ENCODE measurements at regions of chr20 and their contacts with region 1.

Region 1: DNA sequence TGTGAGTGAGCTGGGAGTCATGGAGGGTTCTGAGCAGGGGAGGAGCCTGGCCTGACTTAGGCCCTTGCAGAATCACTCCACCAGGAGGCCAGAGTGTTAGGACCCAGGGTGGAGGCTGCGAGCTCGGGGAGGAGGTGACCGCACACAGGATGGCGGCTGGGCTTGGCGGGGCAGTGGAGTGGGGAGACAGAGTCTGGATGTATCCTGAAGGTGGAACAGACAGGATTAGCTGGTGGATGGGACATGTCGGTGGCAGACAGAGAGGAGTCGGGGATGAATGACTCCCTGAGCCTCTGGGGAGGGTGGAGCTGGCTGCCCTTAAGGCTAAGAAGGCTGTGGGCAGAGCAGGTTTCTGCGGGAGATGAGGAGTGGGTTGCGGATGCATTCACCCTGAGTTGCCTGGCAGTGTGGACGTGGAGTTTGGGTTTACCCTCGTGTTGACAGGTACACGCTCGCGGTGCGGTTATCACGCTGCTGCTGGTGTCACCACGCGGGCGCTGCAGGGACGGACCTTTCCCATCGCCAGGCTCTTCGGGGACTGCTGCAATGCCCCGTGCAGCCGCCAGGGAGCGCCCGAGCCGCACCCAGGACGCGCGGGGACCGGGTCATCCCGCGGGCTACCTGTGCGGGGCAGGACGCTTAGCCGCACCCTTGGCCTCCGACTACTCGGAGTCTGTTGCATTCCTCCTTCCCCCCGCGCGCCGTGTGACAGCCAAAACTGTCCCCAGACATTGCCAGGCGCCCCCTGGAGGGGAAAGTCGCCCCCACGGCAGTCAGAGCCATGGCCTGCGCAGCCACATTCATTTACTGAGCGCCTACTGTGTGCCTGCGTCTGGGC is 43.0 kb upstream of the PTGIS start:
- DNase-seq: peak; percentile 88 to 94 (median 92)
- ATAC-seq: peak; percentile 92
- H3K4me3 ChIP-seq: peak overlapping the region; percentile 43
- H3K27ac ChIP-seq: peak overlapping the region; percentile 28; the same call in 1 of the 3 replicates
- H3K4me1 ChIP-seq: peaks cover 5 to 21% of the 10 kb centered on the region in 2 experiments; a peak in 4 of 5 replicates
- H3K27me3 ChIP-seq: peaks cover under 1 to 17% of the 10 kb centered on the region in 2 experiments; a peak in 3 of 5 replicates
- CTCF ChIP-seq: peak; percentile 98 to 99 (median 99)
- EP300 ChIP-seq: no peak
- POLR2A ChIP-seq: no peak
- RAD21 ChIP-seq: peak; percentile 99 to 100

Region 2: DNA sequence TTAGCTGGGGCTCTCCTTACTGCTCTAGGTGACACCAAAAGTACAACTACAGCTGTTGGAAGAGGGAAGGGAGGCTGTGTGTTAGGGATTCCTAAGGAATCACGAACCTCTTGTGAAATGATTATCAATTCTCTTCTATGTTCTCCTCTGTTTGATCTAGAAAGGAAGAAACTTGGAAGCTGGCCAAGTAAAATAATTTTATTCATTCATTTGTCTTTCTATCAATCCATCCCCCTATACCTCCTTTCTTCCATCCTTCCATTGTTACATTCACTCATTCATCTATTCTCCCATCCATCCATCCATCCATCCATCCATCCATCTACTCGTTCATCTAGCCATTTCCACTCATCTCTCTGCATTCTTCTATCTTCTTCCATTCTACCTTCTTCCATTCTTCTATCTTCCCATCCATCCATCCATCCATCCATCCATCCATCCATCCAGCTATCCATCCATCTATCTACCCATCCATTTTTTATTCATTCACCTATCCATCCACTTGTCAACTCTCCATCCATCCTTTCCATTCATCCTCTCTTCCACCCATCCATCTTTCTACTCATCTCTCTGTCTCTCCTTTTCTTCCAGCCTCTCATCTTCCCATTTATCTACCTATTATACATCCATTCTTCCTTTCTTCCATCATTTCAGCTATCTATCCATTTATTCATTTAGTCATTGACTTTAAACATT is 280.2 kb before region 1 on chr20:
- CTCF ChIA-PET with region 1: interaction called, 47 read pairs
- POLR2A ChIA-PET with region 1: no interaction called
- in situ Hi-C with region 1: loop called (anchors 5 kb)
- intact Hi-C with region 1: loop called (anchors 5 kb)
- DNase-seq: no peak
- ATAC-seq: no peak
- H3K4me3 ChIP-seq: no peak overlapping the region
- H3K27ac ChIP-seq: no peak overlapping the region
- H3K4me1 ChIP-seq: peaks cover 0 to 4% of the 10 kb centered on the region in 2 experiments; a peak in 2 of 5 replicates
- H3K27me3 ChIP-seq: peaks cover 31 to 48% of the 10 kb centered on the region in 2 experiments
- CTCF ChIP-seq: no peak
- EP300 ChIP-seq: no peak
- POLR2A ChIP-seq: no peak
- RAD21 ChIP-seq: no peak

Region 3: GRCh38 chr20:49541733-49542513 is 69.0 kb before region 1 on chr20:
- CTCF ChIA-PET with region 1: interaction called, 50 read pairs
- POLR2A ChIA-PET with region 1: no interaction called
- in situ Hi-C with region 1: loop called (anchors 10 kb)
- intact Hi-C with region 1: loop called (anchors 1 kb)
- DNase-seq: peak; percentile 80 to 90 (median 88)
- ATAC-seq: peak; percentile 86
- H3K4me3 ChIP-seq: no peak overlapping the region
- H3K27ac ChIP-seq: no peak overlapping the region
- H3K4me1 ChIP-seq: peaks cover 0 to 4% of the 10 kb centered on the region in 2 experiments; a peak in 1 of 5 replicates
- H3K27me3 ChIP-seq: peaks cover 2 to 18% of the 10 kb centered on the region in 2 experiments; a peak in 2 of 5 replicates
- CTCF ChIP-seq: peak; percentile 94 to 99 (median 99)
- EP300 ChIP-seq: 0 out of 2 replicates have a peak, but pooled peaks have one; percentile 26
- POLR2A ChIP-seq: no peak
- RAD21 ChIP-seq: peak; percentile 74 to 94

Region 4: GRCh38 chr20:49713753-49714712 is 103.1 kb after region 1 on chr20 and contains the start of gene B4GALT5:
- CTCF ChIA-PET with region 1: no interaction called
- POLR2A ChIA-PET with region 1: no interaction called
- in situ Hi-C with region 1: no loop called
- intact Hi-C with region 1: loop called (anchors 2 kb)
- DNase-seq: peak; percentile 87 to 94 (median 90)
- ATAC-seq: peak; percentile 86
- H3K4me3 ChIP-seq: peak within 1 kb of the TSS; percentile 78
- H3K27ac ChIP-seq: peak within 1 kb of the TSS; percentile 86
- H3K4me1 ChIP-seq: peaks cover 18 to 21% of the 10 kb centered on the region in 2 experiments; a peak in 3 of 5 replicates
- H3K27me3 ChIP-seq: no peaks in the 10 kb centered on the region
- CTCF ChIP-seq: no peak
- EP300 ChIP-seq: 0 out of 2 replicates have a peak, but pooled peaks have one; percentile 6
- POLR2A ChIP-seq: 0 out of 2 replicates have a peak, but pooled peaks have one; percentile 28
- RAD21 ChIP-seq: no peak
- polyA plus RNA-seq, gene B4GALT5: 12.2 to 17.5 TPM

Region 5: GRCh38 chr20:49821870-49822331 is 211.0 kb after region 1 on chr20:
- CTCF ChIA-PET with region 1: interaction called, 24 read pairs
- POLR2A ChIA-PET with region 1: no interaction called
- in situ Hi-C with region 1: no loop called
- intact Hi-C with region 1: no loop called
- DNase-seq: no peak
- ATAC-seq: peak; percentile 48; the same call in 2 of the 3 replicates
- H3K4me3 ChIP-seq: no peak overlapping the region
- H3K27ac ChIP-seq: no peak overlapping the region
- H3K4me1 ChIP-seq: no peaks in the 10 kb centered on the region
- H3K27me3 ChIP-seq: no peaks in the 10 kb centered on the region
- CTCF ChIP-seq: peak in 2 of 3 experiments; percentile 30 to 36; a peak in 3 of 6 replicates
- EP300 ChIP-seq: no peak
- POLR2A ChIP-seq: no peak
- RAD21 ChIP-seq: peak in 1 of 2 experiments; percentile 49; a peak in 2 of 4 replicates

Region 6: DNA sequence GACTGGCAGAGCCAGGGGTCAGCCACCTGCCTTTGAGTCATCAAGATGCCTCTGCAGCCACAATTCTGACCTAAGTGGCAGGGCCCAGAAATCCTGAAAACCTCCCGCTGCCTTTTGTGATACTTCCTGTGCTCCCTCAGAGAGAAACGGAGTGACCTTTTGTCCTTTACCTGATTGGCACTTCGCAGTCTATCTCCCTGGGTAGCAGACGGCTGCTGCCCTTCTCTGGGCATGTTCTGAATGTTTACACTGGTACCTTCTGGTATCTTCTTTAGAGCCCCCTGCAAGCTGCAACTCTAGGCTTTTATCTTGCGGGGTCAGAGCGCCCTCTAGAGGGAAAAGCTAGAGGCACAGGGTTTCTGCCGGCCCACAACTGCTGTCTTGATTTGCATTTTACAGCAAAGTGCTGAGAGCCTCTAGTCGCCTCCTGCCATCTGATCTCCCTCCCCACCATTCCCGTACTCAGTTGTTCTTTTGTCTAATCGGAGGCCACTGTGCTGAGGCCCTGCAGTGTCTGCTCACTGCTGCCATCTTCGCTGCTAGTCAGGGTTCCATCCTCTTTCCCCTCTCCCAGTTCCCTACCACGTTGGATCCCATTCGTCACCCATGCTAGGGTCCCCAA is 277.5 kb after region 1 on chr20:
- CTCF ChIA-PET with region 1: interaction called, 22 read pairs
- POLR2A ChIA-PET with region 1: interaction called, 3 read pairs
- in situ Hi-C with region 1: no loop called
- intact Hi-C with region 1: loop called (anchors 1 kb)
- DNase-seq: peak; percentile 75 to 78 (median 77)
- ATAC-seq: peak; percentile 81
- H3K4me3 ChIP-seq: no peak overlapping the region
- H3K27ac ChIP-seq: no peak overlapping the region
- H3K4me1 ChIP-seq: peaks cover 8 to 44% of the 10 kb centered on the region in 2 experiments
- H3K27me3 ChIP-seq: no peaks in the 10 kb centered on the region
- CTCF ChIP-seq: peak; percentile 87 to 90 (median 87)
- EP300 ChIP-seq: no peak
- POLR2A ChIP-seq: no peak
- RAD21 ChIP-seq: peak; percentile 48 to 81

Region 7: DNA sequence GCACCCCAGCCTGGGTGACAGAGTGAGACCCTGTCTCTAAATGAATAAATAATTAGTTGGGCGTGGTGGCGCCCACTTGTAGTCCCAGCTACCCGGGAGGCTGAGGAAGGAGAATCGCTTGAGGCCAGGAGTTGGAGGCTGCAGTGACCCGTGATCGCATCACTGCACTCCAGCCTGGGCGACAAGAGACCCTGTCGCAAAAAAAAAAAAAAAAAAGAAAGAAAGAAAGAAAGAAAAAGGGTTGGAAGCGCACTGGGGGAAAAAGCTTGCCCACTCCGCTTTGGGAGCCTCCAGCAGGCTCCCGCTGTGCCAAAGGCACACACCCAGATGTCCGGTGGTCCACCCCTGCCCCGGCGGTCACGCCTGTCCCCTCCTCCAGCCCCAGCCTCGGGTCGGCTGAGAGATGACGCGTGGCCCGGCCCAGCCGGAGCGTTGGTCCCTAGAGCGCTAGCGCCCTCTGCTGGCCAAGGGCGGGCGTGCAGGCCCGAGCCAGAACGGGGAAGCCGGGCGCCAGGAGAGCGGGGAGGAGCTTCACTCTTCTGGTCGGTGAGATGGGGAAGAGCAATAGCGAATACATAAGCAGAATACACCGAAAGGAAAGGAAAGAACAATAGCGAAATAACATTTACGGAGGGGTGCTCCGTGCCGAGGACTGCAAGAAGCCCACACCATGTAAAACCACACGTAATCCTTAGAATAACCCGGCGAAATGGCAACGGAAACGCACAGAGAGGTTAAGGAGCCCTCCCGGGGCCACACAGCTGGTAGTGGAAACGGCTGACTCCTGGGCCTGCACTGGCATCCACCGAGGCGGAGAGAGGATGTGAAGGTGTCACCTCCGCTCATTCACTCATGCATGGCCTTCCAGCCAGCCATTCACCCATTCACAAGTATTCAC is 460.3 kb after region 1 on chr20:
- CTCF ChIA-PET with region 1: interaction called, 4 read pairs
- POLR2A ChIA-PET with region 1: no interaction called
- in situ Hi-C with region 1: no loop called
- intact Hi-C with region 1: loop called (anchors 2 kb)
- DNase-seq: peak; percentile 92 to 96 (median 94)
- ATAC-seq: peak; percentile 99
- H3K4me3 ChIP-seq: peak overlapping the region; percentile 27
- H3K27ac ChIP-seq: peak overlapping the region; percentile 50; the same call in 2 of the 3 replicates
- H3K4me1 ChIP-seq: peaks cover 2 to 27% of the 10 kb centered on the region in 2 experiments; a peak in 4 of 5 replicates
- H3K27me3 ChIP-seq: no peaks in the 10 kb centered on the region
- CTCF ChIP-seq: peak; percentile 98 to 99 (median 99)
- EP300 ChIP-seq: 0 out of 2 replicates have a peak, but pooled peaks have one; percentile 28
- POLR2A ChIP-seq: 0 out of 2 replicates have a peak, but pooled peaks have one; percentile 38
- RAD21 ChIP-seq: peak; percentile 99 to 100

Measured in K562 (cell line).